Naive thymus-derived CD4-positive, alpha-beta T cell (primary cell): ENCODE measurements at regions of chr5 and their contacts with region 1.

Region 1: DNA sequence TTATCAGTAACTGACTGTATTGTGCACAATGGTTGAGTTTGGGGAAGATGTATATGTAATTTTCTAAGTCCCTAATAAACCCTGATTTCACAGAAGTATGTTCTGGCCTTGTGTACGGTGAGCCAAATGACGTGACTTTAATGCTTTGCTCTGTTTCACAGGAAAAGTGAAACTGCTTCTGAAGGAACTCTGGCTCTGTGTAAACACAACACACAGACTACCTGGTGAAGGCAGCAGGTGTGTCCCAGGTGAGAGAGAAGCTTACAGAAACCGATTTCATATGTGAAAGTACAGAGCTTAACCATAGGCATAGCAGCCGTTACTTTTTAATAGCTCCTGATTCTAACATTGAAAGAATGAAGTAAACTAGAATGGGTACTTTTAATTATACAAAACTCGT is 31.9 kb downstream of the ICE1 start:
- DNase-seq: no peak
- ATAC-seq: no peak
- H3K4me3 ChIP-seq: no peak overlapping the region
- H3K4me3 Mint-ChIP-seq: no peak overlapping the region
- H3K27ac ChIP-seq: no peak overlapping the region
- H3K27ac Mint-ChIP-seq: no peak overlapping the region
- H3K4me1 ChIP-seq: no peaks in the 10 kb centered on the region
- H3K4me1 Mint-ChIP-seq: peaks cover 0 to 4% (median 0%) of the 10 kb centered on the region in 7 donors
- H3K27me3 ChIP-seq: no peaks in the 10 kb centered on the region
- H3K27me3 Mint-ChIP-seq: no peaks in the 10 kb centered on the region

Region 2: DNA sequence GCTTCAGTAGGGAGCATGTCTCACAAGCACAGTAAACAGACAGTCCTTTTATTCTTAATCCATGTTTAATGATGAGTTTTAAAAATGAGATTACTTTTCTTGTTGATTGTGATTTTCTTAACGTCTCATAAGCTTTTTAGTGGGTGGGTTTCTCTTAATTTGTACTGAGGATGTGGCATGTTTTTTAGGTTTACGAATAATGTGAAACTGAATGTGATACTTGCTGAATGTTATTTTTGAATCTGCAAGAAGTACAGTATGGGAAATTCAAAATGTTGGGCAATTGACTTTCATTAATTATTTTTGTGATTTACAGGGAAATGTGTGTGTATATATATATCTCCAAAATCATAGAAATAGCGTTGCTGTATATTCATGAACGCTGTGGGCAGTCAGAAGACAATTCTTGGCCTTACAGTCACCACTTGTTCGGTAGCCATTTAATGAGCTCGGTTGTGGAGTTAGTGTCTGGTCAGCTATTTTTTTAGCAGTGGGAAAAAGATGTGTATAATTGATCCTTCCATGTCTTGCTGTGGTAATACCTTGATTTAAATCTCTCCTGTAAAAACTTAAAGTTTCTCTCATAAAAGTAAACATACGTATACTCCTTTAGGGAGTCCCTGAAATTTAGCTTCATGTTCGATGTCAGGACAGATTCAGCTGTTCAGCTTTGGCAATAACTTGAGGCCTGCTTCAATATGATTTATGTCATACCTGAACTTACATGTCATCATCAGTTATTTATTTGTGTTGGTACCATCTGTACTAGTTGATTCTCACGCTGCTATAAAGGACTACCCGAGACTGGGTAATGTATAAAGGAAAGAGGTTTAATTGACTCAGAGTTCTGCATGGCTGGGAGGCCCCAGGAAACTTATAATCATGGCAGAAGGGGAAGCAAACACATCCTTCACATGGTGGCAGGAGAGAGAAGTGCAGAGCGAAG is 16.9 kb before region 1 on chr5:
- CTCF ChIA-PET with region 1: no interaction called
- POLR2A ChIA-PET with region 1: no interaction called
- intact Hi-C with region 1: loop called in 1 of 2 experiments (anchors 2 kb)
- DNase-seq: no peak
- ATAC-seq: no peak
- H3K4me3 ChIP-seq: no peak overlapping the region
- H3K4me3 Mint-ChIP-seq: no peak overlapping the region
- H3K27ac ChIP-seq: no peak overlapping the region
- H3K27ac Mint-ChIP-seq: peak overlapping the region in 1 of 9 donors; percentile 39
- H3K4me1 ChIP-seq: peaks cover 0 to 3% of the 10 kb centered on the region in 2 donors
- H3K4me1 Mint-ChIP-seq: peaks cover 10 to 31% (median 21%) of the 10 kb centered on the region in 7 donors
- H3K27me3 ChIP-seq: no peaks in the 10 kb centered on the region
- H3K27me3 Mint-ChIP-seq: no peaks in the 10 kb centered on the region

Region 3: DNA sequence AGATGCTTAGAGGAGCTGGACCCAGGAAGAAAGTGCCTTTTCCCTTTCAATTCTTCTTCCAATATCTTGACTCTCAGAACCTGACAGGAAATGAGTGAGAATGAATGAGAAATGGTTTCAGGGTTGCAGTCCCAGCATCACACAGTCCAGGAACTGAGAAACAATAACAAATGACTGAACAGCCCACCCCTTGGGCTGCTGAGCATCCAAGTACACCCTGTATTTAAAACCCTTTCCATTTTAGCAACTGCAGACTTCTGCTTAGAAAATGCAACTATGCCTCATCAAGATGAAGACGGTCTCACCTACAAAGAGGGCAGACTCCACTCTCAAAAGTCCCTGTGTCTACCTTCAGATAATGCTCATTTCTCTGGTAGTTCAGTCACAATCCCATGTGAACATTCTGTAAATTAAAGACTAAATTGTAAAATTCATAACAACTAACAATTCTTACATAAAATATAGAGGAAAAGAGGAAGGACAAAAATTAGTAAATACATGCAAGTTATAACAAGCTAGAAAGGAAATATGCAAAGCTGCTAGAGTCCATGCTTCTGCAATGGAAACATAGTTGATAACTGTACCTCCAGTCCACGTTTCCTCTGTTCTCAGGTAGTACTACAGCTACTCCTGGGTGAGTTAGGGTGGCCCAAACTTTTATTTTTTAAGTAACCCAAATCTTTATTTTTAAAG is 284.6 kb after region 1 on chr5:
- CTCF ChIA-PET with region 1: no interaction called
- POLR2A ChIA-PET with region 1: no interaction called
- intact Hi-C with region 1: no loop called
- DNase-seq: no peak
- ATAC-seq: no peak
- H3K4me3 ChIP-seq: no peak overlapping the region
- H3K4me3 Mint-ChIP-seq: no peak overlapping the region
- H3K27ac ChIP-seq: no peak overlapping the region
- H3K27ac Mint-ChIP-seq: no peak overlapping the region
- H3K4me1 ChIP-seq: no peaks in the 10 kb centered on the region
- H3K4me1 Mint-ChIP-seq: peaks cover 0 to 7% (median 0%) of the 10 kb centered on the region in 7 donors
- H3K27me3 ChIP-seq: no peaks in the 10 kb centered on the region
- H3K27me3 Mint-ChIP-seq: peaks cover 0 to 18% (median 3%) of the 10 kb centered on the region in 5 donors

Region 4: GRCh38 chr5:6246820-6247437 is 792.5 kb after region 1 on chr5:
- CTCF ChIA-PET with region 1: no interaction called
- POLR2A ChIA-PET with region 1: no interaction called
- intact Hi-C with region 1: no loop called
- DNase-seq: no peak
- ATAC-seq: no peak
- H3K4me3 ChIP-seq: no peak overlapping the region
- H3K4me3 Mint-ChIP-seq: no peak overlapping the region
- H3K27ac ChIP-seq: no peak overlapping the region
- H3K27ac Mint-ChIP-seq: no peak overlapping the region
- H3K4me1 ChIP-seq: no peaks in the 10 kb centered on the region
- H3K4me1 Mint-ChIP-seq: no peaks in the 10 kb centered on the region
- H3K27me3 ChIP-seq: no peaks in the 10 kb centered on the region
- H3K27me3 Mint-ChIP-seq: no peaks in the 10 kb centered on the region